Heart right ventricle (tissue), 16 donors: ENCODE measurements at regions of chr2 and their contacts with region 1.

Region 1: GRCh38 chr2:207394812-207395534 is 134.8 kb upstream of the CREB1 start:
- DNase-seq: peak in 1 of 2 donors; percentile 8
- ATAC-seq: peak in 6 of 8 donors; percentile 27 to 91 (median 66)
- H3K4me3 ChIP-seq: no peak overlapping the region
- H3K27ac ChIP-seq: peak overlapping the region in 2 of 10 donors; percentile 69 to 88
- H3K4me1 ChIP-seq: peaks cover 0 to 11% (median 0%) of the 10 kb centered on the region in 9 donors
- H3K27me3 ChIP-seq: no peaks in the 10 kb centered on the region
- CTCF ChIP-seq: no peak

Region 2: GRCh38 chr2:207341804-207342203 is 53.2 kb before region 1 on chr2:
- intact Hi-C with region 1: loop called in 1 of 10 experiments (anchors 10 kb)
- DNase-seq: no peak
- ATAC-seq: no peak
- H3K4me3 ChIP-seq: no peak overlapping the region
- H3K27ac ChIP-seq: no peak overlapping the region
- H3K4me1 ChIP-seq: peaks cover 0 to 33% (median 20%) of the 10 kb centered on the region in 9 donors
- H3K27me3 ChIP-seq: no peaks in the 10 kb centered on the region
- CTCF ChIP-seq: peak in 4 of 9 donors; percentile 13 to 30 (median 23)